CD8-positive, alpha-beta memory T cell (primary cell): ENCODE measurements at regions of chr6 and their contacts with region 1.

Region 1: DNA sequence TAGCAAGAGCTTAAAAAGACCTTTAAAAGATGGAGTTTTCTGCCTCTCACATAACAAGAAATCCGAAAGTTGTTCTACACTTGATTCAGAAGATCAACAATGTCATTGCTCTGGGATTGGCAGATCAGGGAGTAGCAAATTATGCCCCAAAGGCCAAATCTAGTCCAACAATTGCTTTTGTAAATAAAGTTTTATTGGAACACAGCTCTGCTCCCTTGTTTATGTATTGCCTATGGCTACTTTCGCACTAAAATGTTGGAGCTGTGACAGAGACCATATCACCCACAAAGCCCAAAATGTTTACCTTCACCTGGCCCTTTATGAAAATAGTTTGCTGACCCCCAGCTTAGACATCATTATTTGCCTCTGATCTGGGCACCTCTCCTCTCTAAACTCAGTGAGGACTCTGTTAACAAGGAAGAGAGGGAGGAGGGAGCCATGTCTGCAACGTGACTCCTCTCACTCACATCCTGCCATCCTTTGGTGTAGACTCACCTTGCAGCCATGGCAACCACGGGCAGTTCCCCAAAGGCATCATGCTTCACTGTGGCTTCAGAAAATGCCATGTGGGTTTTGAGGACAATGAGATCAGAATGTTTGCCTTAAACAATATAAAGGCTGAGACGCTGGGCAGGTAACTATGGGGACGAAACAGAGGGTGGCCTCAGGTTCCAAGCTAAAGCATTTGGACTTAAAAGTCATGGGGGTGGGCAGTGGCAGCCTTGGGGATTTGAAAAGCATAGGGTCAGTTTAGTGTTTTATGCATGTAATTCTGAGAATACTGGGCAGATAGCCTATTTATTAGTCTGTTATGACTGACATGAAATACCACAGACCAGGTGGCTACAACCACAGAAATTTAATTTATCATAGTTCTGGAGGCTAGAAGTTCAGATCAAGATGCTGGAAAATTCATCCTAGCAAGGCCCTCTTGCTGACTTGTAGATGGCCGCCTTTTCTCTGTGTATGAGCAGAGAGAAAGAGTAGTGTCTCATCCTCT is 149.7 kb upstream of the TNFAIP3 start:
- DNase-seq: peak; percentile 62 to 94 (median 82)
- H3K4me3 ChIP-seq: no peak overlapping the region
- H3K4me3 Mint-ChIP-seq: peak overlapping the region; percentile 30 to 73 (median 61)
- H3K27ac ChIP-seq: peak overlapping the region; percentile 60
- H3K27ac Mint-ChIP-seq: peak overlapping the region; percentile 92 to 100 (median 98)
- H3K4me1 ChIP-seq: peaks cover 36% of the 10 kb centered on the region
- H3K4me1 Mint-ChIP-seq: peaks cover 47 to 59% (median 55%) of the 10 kb centered on the region in 3 donors
- H3K27me3 ChIP-seq: no peaks in the 10 kb centered on the region
- H3K27me3 Mint-ChIP-seq: peaks cover 0 to 1% of the 10 kb centered on the region in 2 donors

Region 2: GRCh38 chr6:137823826-137824555 is 106.6 kb after region 1 on chr6:
- CTCF ChIA-PET with region 1: interaction called, 3 read pairs
- POLR2A ChIA-PET with region 1: interaction called, 17 read pairs
- DNase-seq: peak; percentile 80 to 97 (median 96)
- H3K4me3 ChIP-seq: peak overlapping the region; percentile 41
- H3K4me3 Mint-ChIP-seq: peak overlapping the region; percentile 20 to 82 (median 76)
- H3K27ac ChIP-seq: peak overlapping the region; percentile 97
- H3K27ac Mint-ChIP-seq: peak overlapping the region; percentile 91 to 100 (median 99)
- H3K4me1 ChIP-seq: peaks cover 79% of the 10 kb centered on the region
- H3K4me1 Mint-ChIP-seq: peaks cover 49 to 85% (median 78%) of the 10 kb centered on the region in 3 donors
- H3K27me3 ChIP-seq: no peaks in the 10 kb centered on the region
- H3K27me3 Mint-ChIP-seq: peaks cover 0 to 3% of the 10 kb centered on the region in 2 donors

Region 3: GRCh38 chr6:137904822-137905617 is 187.6 kb after region 1 on chr6:
- CTCF ChIA-PET with region 1: no interaction called
- POLR2A ChIA-PET with region 1: no interaction called
- DNase-seq: peak in 3 of 5 donors; percentile 11 to 59 (median 31)
- H3K4me3 ChIP-seq: no peak overlapping the region
- H3K4me3 Mint-ChIP-seq: peak overlapping the region in 6 of 7 donors; percentile 63 to 85 (median 72)
- H3K27ac ChIP-seq: peak overlapping the region; percentile 44
- H3K27ac Mint-ChIP-seq: peak overlapping the region in 6 of 8 donors; percentile 2 to 82 (median 62)
- H3K4me1 ChIP-seq: peaks cover 7% of the 10 kb centered on the region
- H3K4me1 Mint-ChIP-seq: peaks cover 19 to 34% (median 28%) of the 10 kb centered on the region in 3 donors
- H3K27me3 ChIP-seq: no peaks in the 10 kb centered on the region
- H3K27me3 Mint-ChIP-seq: peaks cover 3 to 33% of the 10 kb centered on the region in 2 donors

Region 4: DNA sequence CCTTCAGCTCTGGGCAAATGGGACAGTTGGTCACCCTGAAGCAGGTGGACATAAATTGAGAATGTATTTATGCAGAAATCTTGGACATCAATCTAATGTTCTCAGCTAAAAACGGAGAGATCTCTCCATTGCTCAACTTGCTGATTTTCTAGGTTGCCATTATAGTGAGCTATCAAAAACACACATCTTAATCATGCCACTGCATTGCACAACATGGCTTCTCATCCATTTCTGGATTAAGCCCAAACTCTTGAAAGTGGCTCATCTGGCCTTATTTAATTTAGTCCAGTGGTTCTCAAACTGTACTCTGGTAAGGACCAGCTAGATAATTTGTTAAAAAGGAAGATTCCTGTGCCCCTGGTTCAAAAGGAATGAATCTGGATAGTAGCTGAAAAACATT is 1982.0 kb after region 1 on chr6:
- CTCF ChIA-PET with region 1: no interaction called
- POLR2A ChIA-PET with region 1: no interaction called
- DNase-seq: no peak
- H3K4me3 ChIP-seq: no peak overlapping the region
- H3K4me3 Mint-ChIP-seq: no peak overlapping the region
- H3K27ac ChIP-seq: no peak overlapping the region
- H3K27ac Mint-ChIP-seq: no peak overlapping the region
- H3K4me1 ChIP-seq: no peaks in the 10 kb centered on the region
- H3K4me1 Mint-ChIP-seq: peaks cover 0 to 12% (median 2%) of the 10 kb centered on the region in 3 donors
- H3K27me3 ChIP-seq: no peaks in the 10 kb centered on the region
- H3K27me3 Mint-ChIP-seq: no peaks in the 10 kb centered on the region